Sigmoid colon (tissue), 7 donors: ENCODE measurements at regions of chr12 and their contacts with region 1.

Region 1: GRCh38 chr12:117119592-117120198 is 20.5 kb upstream of the TESC start:
- DNase-seq: no peak
- H3K4me3 ChIP-seq: no peak overlapping the region
- H3K27ac ChIP-seq: peak overlapping the region in 1 of 4 donors; percentile 4
- H3K4me1 ChIP-seq: no peaks in the 10 kb centered on the region
- H3K27me3 ChIP-seq: no peaks in the 10 kb centered on the region
- CTCF ChIP-seq: peak in 3 of 4 experiments; percentile 50 to 67 (median 55)
- EP300 ChIP-seq: no peak
- POLR2A ChIP-seq: no peak

Region 2: DNA sequence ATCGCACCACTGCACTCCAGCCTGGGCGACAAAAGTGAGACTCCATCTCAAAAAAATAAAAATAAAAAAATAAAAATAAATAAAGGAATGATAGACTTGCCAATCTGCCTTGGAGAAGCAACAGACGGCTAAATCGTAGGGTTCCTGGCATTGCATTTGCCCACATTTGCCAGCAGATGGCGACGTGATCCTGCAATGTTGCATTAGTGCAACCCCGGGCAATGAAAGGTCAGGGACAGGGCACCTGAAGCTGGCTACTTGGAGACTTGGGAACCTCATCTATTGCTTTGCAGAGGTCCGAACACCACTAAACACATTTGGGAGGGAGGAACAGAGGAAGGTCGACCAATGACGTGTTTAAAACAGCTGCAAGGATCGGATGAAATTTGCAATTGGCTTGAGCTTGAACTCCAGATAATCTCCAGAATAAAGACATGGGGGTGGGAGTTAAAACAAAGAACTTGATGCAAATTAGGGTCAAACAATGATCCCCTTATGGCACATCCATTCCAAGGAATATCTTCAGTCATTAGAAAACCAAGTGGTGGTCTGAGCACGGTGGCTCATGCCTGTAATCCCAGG is 416.4 kb before region 1 on chr12:
- intact Hi-C with region 1: loop called (anchors 10 kb)
- DNase-seq: peak; percentile 79
- H3K4me3 ChIP-seq: no peak overlapping the region
- H3K27ac ChIP-seq: no peak overlapping the region
- H3K4me1 ChIP-seq: peaks cover 0 to 12% (median 3%) of the 10 kb centered on the region in 4 donors
- H3K27me3 ChIP-seq: peaks cover 0 to 10% (median 0%) of the 10 kb centered on the region in 3 donors
- CTCF ChIP-seq: peak; percentile 80 to 90 (median 86)
- EP300 ChIP-seq: no peak
- POLR2A ChIP-seq: no peak

Region 3: DNA sequence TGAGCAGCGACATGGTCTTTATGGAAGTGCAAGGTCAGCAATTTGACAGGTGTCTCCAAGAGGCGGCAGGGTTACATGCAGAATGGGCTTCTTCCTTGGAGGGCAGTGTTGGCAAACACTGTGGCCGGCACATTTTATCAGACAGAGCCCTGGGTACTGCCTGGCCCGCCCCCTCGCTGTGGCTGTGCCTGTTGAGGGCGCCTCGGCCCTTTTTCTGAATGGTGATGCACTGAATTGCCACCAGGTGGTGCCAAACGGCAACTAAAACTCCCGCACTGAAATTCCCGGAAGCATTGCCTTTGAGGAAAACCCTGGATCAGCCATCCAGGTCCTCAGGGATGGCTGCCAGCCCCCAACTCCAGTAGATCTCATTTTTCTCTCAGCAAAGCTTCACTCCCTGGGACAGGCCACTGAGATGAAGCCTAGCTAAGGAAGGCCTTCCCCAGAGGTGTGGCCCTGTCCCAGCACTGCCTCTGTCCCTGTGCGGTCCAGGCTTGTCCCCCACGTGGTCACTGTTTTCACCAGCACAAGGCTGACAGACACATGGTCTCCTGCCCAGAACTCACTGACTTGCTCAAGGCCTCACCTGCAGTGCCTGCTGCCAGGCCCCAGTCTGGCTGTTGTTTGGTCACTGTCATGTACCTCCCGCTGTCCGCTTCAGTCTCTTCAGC is 94.1 kb before region 1 on chr12:
- intact Hi-C with region 1: loop called (anchors 1 kb)
- DNase-seq: peak; percentile 84
- H3K4me3 ChIP-seq: no peak overlapping the region
- H3K27ac ChIP-seq: no peak overlapping the region
- H3K4me1 ChIP-seq: peaks cover 0 to 8% (median 2%) of the 10 kb centered on the region in 4 donors
- H3K27me3 ChIP-seq: no peaks in the 10 kb centered on the region
- CTCF ChIP-seq: peak; percentile 75 to 87 (median 85)
- EP300 ChIP-seq: no peak
- POLR2A ChIP-seq: no peak

Region 4: DNA sequence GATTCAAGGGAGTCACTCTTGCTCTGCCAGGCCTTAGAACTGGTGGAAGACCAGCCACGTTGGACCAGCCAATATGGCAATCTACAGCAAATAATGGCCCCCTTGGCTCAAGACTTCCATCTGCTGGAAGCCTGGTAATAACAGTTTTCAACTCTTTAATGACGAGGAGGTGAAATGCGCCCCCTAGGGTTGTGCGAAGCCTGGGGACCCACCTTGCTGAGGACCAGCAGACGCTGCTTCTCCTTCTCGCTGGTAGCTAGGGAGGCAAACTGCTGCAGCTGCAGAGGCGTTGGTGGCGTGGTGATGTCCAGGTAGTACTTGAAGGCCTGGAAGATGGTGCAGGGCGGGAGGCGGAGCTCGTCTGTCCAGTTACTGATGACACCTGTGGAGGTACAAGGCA is 112.1 kb after region 1 on chr12:
- intact Hi-C with region 1: no loop called
- DNase-seq: no peak
- H3K4me3 ChIP-seq: no peak overlapping the region
- H3K27ac ChIP-seq: no peak overlapping the region
- H3K4me1 ChIP-seq: no peaks in the 10 kb centered on the region
- H3K27me3 ChIP-seq: peaks cover 0 to 27% (median 9%) of the 10 kb centered on the region in 3 donors
- CTCF ChIP-seq: no peak
- EP300 ChIP-seq: no peak
- POLR2A ChIP-seq: no peak